ENCODE measurements at regions of chr17 and their contacts with region 1.

Region 1: DNA sequence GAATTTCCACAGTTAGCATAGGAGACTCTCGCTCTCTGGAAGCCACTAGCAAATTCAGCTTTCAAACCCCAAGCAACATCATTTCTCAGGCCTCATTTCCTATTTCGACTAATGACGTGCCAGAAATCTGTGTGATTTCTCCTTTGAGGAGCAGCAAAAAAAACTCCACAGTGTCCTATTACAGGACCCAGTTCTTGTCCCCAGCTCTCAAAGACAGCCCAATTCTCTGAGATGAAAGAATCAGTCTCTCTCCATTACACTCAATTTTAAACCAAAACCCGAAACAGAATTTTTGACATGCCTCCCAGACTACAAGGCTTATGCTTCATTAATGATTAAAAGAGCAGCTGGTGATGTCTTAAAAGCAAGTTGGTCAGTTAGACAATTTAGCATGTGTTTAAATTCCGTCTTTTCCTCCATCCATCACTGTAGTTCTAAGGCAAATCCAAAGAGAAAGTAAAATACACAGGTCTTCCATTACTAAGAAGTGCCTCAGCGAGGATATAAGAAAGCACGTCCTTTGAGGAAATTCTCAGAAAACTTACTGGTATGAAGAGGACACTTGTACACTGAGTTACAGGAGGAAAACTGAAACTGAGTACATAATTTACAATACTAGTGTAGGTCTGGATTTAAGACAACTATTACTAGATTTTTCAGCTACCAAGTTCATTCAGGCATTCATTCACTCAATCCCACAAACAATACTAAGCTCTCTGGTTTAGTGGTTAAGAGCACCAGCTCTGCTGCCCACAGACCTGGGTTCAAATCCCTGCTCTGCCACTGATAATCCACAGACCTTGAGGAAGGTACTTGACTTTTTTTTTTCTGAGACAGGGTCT is 12.5 kb downstream of the TOM1L2 start:
- DNase-seq: no peak
- H3K4me3 ChIP-seq: no peak overlapping the region
- H3K27ac ChIP-seq: peak overlapping the region; percentile 90
- H3K4me1 ChIP-seq: peaks cover 54% of the 10 kb centered on the region
- H3K27me3 ChIP-seq: no peaks in the 10 kb centered on the region
- CTCF ChIP-seq: no peak

Region 2: GRCh38 chr17:17812211-17813057 is 147.3 kb before region 1 on chr17:
- CTCF ChIA-PET with region 1: no interaction called
- POLR2A ChIA-PET with region 1: no interaction called
- intact Hi-C with region 1: no loop called
- DNase-seq: peak; percentile 49 to 76
- H3K4me3 ChIP-seq: no peak overlapping the region
- H3K27ac ChIP-seq: 0 out of 2 replicates have a peak overlapping the region, but pooled peaks have one; percentile 8
- H3K4me1 ChIP-seq: peaks cover 16% of the 10 kb centered on the region; the same call in 1 of the 2 replicates
- H3K27me3 ChIP-seq: no peaks in the 10 kb centered on the region
- CTCF ChIP-seq: peak; percentile 100

Region 3: DNA sequence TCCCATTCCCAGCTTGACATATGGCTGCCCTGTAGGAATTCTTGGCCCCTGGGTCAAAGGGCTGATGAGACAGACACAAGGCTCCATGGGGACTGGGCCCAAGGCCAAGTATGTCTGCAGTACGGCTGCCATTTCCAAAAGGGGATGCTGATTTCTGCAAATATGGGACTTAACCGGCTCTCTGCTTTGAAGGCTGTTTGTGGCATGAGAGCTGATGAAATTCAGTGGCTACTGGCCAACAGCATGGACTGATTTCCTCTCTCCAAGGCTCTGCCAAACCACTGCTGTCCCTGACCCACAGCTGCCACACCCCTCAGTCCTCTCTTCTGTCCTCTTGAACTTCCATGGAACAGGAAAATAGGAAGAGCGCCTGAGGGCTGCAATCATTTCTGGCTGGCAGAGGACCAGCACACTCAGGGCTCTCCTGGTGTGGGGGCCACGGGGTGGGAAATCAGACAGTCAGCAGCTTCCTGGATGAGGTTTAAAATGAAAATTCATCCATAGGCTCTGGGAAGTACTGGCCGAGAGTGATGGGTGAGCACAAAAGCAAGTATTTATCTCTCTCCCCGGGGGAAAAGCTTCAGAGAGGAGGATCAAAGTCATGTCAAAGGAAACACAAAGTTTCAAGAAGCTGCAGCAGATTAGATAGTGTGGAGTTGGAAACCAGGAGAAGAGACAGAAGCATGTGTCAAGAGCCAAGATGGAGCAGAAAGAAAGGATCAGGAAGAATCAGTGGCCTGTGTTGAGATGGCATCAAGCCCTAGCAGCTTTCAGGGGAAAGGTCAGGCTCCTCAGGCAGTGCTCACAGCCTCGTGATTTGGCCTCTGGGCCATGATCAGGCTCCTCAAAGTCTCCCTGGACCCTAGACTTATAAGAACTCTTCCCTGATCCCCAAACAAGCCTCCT is 58.9 kb before region 1 on chr17:
- CTCF ChIA-PET with region 1: no interaction called
- POLR2A ChIA-PET with region 1: interaction called, 10 read pairs
- intact Hi-C with region 1: no loop called
- DNase-seq: peak; percentile 85
- H3K4me3 ChIP-seq: no peak overlapping the region
- H3K27ac ChIP-seq: peak overlapping the region; percentile 63
- H3K4me1 ChIP-seq: peaks cover 36% of the 10 kb centered on the region
- H3K27me3 ChIP-seq: no peaks in the 10 kb centered on the region
- CTCF ChIP-seq: no peak

Region 4: GRCh38 chr17:17944743-17945142 is 15.0 kb before region 1 on chr17:
- CTCF ChIA-PET with region 1: no interaction called
- POLR2A ChIA-PET with region 1: interaction called, 13 read pairs
- intact Hi-C with region 1: no loop called
- DNase-seq: no peak
- H3K4me3 ChIP-seq: no peak overlapping the region
- H3K27ac ChIP-seq: no peak overlapping the region
- H3K4me1 ChIP-seq: peaks cover 71% of the 10 kb centered on the region
- H3K27me3 ChIP-seq: no peaks in the 10 kb centered on the region
- CTCF ChIP-seq: no peak

Region 5: GRCh38 chr17:17994271-17995069 is 34.7 kb after region 1 on chr17:
- CTCF ChIA-PET with region 1: no interaction called
- POLR2A ChIA-PET with region 1: no interaction called
- intact Hi-C with region 1: loop called (anchors 1 kb)
- DNase-seq: no peak
- H3K4me3 ChIP-seq: no peak overlapping the region
- H3K27ac ChIP-seq: no peak overlapping the region
- H3K4me1 ChIP-seq: peaks cover 22% of the 10 kb centered on the region
- H3K27me3 ChIP-seq: no peaks in the 10 kb centered on the region
- CTCF ChIP-seq: peak; percentile 31; the same call in 1 of the 2 replicates

Region 6: GRCh38 chr17:18033442-18034099 is 73.8 kb after region 1 on chr17:
- CTCF ChIA-PET with region 1: no interaction called
- POLR2A ChIA-PET with region 1: no interaction called
- intact Hi-C with region 1: loop called (anchors 1 kb)
- DNase-seq: peak; percentile 54 to 82
- H3K4me3 ChIP-seq: no peak overlapping the region
- H3K27ac ChIP-seq: no peak overlapping the region
- H3K4me1 ChIP-seq: peaks cover 30% of the 10 kb centered on the region
- H3K27me3 ChIP-seq: no peaks in the 10 kb centered on the region
- CTCF ChIP-seq: peak; percentile 89